ENCODE measurements at regions of chr1 and their contacts with region 1.

Region 1: DNA sequence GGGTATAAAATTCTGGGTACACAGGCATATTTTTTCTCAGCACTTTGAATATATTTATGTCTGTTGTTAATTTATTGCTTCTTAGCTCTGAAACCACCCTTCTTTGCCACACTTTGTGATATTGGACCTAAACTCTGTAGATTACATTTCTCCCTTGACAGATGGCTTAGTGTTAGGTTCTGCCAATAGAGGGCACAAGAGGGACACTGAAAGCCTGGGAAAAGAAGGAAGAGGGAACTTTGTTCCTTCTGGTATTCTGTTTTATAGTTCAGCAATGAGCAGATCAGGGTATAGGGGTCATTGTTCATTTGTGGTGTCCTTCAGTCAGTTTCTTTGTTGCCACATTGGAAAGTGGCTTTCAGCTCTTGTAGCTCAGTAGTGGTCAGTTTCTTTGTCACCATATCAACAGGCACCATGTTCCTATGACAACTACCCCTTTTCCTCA is 423.5 kb upstream of the PROX1 start:
- DNase-seq: peak; percentile 19
- H3K4me3 ChIP-seq: no peak overlapping the region
- H3K27ac ChIP-seq: no peak overlapping the region
- H3K4me1 ChIP-seq: no peaks in the 10 kb centered on the region
- H3K27me3 ChIP-seq: no peaks in the 10 kb centered on the region
- CTCF ChIP-seq: peak; percentile 24 to 73 (median 59)
- EP300 ChIP-seq: no peak
- POLR2A ChIP-seq: no peak

Region 2: GRCh38 chr1:213014642-213015041 is 549.6 kb before region 1 on chr1:
- in situ Hi-C with region 1: no loop called
- intact Hi-C with region 1: loop called (anchors 5 kb)
- DNase-seq: no peak
- H3K4me3 ChIP-seq: peak overlapping the region; percentile 63 to 88 (median 80)
- H3K27ac ChIP-seq: peak overlapping the region; percentile 95 to 97 (median 96)
- H3K4me1 ChIP-seq: peaks cover 0 to 14% (median 8%) of the 10 kb centered on the region in 4 donors
- H3K27me3 ChIP-seq: no peaks in the 10 kb centered on the region
- CTCF ChIP-seq: no peak
- EP300 ChIP-seq: no peak
- POLR2A ChIP-seq: no peak

Region 3: DNA sequence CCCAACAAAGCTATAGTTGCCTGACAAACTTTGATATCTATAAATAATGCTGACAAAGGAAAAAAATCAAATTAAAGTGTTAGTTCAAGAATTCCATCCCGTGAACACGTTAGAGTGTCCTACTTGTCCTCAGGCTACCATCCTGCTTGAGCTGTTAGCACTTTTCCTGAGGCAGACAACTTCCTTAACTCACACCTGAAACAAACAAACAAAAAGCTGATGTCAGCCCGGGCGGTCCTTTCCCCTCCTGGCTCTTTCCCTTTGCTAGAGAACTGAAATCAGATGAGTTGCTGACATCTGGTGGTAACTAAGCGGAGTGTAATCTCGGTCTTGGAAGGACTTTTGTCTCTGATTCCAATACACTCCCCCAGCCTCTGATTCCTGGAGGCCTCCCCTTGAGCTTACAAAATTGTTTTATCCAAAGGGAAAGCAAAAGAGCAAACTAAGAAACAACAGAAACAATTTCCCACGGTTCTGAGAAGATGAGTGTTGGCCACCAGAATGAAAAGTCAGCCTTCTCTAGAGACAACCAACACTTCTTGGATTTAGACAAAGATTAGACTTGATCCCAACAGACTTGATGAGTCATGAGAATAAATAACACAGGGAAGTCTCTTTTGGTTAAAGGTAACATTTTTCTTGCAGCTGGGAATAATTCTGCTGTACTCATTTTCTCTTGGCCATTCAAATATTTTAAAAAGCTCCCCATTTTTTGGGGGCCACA is 559.0 kb after region 1 on chr1:
- in situ Hi-C with region 1: loop called in 3 of 4 experiments (anchors 25 kb)
- intact Hi-C with region 1: no loop called
- DNase-seq: peak; percentile 48
- H3K4me3 ChIP-seq: no peak overlapping the region
- H3K27ac ChIP-seq: no peak overlapping the region
- H3K4me1 ChIP-seq: peaks cover 0 to 3% (median 0%) of the 10 kb centered on the region in 4 donors
- H3K27me3 ChIP-seq: no peaks in the 10 kb centered on the region
- CTCF ChIP-seq: peak; percentile 41 to 74 (median 55)
- EP300 ChIP-seq: no peak
- POLR2A ChIP-seq: no peak

Region 4: DNA sequence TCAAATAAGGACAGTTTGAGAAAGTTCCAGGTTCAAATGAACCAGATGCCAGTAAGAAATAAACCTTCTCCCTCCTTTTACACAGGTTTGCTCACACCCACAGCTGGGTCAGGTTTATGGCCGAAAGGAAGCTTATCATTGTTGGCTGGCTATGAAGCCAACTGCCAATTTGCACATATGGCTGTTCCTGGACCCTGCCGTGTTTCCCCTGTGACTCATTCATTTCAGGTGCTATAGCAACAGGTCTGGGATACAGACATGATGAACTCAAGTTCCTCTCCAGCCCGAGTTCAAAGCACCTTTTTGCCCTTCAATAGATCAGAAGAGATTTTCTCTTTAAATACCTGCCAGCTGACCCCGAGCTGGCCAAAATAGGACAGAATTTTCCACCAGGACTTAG is 582.3 kb after region 1 on chr1:
- in situ Hi-C with region 1: loop called in 1 of 4 experiments (anchors 25 kb)
- intact Hi-C with region 1: no loop called
- DNase-seq: peak; percentile 49
- H3K4me3 ChIP-seq: no peak overlapping the region
- H3K27ac ChIP-seq: no peak overlapping the region
- H3K4me1 ChIP-seq: no peaks in the 10 kb centered on the region
- H3K27me3 ChIP-seq: no peaks in the 10 kb centered on the region
- CTCF ChIP-seq: no peak
- EP300 ChIP-seq: peak; percentile 42
- POLR2A ChIP-seq: no peak

Measured in transverse colon (tissue), 4 donors.